Gastrocnemius medialis (tissue), 4 donors: ENCODE measurements at regions of chr5 and their contacts with region 1.

Region 1: DNA sequence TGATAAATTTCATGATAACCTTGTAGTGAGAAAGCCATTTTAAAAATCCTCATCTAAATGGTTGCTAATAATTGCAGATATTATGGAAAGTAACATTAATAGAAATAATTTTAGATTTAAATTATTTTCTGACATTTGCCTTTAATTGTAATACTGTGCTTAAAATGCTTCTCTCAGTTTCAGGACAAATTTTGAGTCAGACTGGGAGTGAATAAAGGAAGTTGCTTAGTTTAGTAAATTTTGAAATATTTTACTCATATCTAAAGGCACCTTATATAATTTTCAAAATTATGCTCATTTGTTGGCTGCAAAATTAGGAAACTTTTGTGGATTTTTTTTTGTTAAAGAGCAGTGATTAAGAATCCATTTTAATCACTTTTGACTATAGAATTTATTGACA is 93.8 kb downstream of the CSNK1G3 start:
- DNase-seq: no peak
- ATAC-seq: no peak
- H3K4me3 ChIP-seq: no peak overlapping the region
- H3K27ac ChIP-seq: no peak overlapping the region
- H3K4me1 ChIP-seq: no peaks in the 10 kb centered on the region
- H3K27me3 ChIP-seq: no peaks in the 10 kb centered on the region
- CTCF ChIP-seq: no peak
- POLR2A ChIP-seq: no peak

Region 2: DNA sequence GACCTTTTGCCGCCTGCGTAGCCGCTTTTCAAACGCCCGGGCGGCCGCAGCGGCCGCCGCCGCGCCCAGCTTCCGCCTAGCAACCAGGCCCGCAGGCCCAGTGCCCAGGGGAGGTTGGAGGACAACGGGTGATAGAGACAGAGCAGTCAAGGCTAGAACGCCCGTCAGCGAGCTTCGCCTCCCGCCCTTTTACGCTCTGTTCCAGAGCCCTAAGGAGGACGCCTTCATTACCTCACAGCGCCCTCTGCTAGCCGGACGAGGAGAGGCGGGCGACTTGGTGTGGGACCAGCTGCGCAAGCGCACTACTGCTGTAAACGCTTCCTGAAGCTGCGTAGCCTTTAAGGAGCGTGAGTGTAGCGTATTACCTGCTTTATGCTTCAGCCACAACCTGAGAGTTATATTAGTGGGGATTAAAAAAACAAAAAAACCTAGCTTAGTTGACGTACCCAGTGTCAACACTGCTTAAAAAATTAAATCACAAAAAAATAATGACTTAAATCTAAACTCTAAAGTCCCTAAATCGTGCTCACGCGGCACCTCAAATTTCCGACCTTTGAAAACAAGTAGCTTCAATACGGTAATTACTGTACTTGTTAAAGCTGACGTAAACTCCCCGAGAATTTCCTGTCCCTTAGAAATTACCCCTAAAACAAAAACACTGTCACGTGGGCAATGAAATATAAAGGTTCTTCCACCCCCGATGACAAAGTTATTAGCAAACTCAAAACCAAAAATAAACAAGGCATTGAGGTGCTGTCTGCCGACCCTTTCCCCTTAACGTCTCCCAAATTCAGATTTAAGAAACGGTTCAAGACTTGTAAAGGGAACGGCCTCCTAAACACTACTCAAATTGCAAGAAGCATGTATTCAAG is 182.3 kb before region 1 on chr5 and contains the start of gene CEP120:
- in situ Hi-C with region 1: loop called in 3 of 4 experiments (anchors 5 to 25 kb)
- intact Hi-C with region 1: loop called (anchors 1 kb)
- DNase-seq: peak; percentile 97 to 99
- ATAC-seq: peak; percentile 98 to 99
- H3K4me3 ChIP-seq: peak within 1 kb of the TSS; percentile 81 to 98 (median 89)
- H3K27ac ChIP-seq: peak within 1 kb of the TSS; percentile 86 to 91 (median 87)
- H3K4me1 ChIP-seq: peaks cover 9 to 11% of the 10 kb centered on the region in 2 donors
- H3K27me3 ChIP-seq: no peaks in the 10 kb centered on the region
- CTCF ChIP-seq: peak in 4 of 5 experiments; percentile 52 to 78 (median 70)
- POLR2A ChIP-seq: peak; percentile 48 to 67
- total RNA-seq, gene CEP120: 3.9 to 7.8 (median 7.6) TPM

Region 3: DNA sequence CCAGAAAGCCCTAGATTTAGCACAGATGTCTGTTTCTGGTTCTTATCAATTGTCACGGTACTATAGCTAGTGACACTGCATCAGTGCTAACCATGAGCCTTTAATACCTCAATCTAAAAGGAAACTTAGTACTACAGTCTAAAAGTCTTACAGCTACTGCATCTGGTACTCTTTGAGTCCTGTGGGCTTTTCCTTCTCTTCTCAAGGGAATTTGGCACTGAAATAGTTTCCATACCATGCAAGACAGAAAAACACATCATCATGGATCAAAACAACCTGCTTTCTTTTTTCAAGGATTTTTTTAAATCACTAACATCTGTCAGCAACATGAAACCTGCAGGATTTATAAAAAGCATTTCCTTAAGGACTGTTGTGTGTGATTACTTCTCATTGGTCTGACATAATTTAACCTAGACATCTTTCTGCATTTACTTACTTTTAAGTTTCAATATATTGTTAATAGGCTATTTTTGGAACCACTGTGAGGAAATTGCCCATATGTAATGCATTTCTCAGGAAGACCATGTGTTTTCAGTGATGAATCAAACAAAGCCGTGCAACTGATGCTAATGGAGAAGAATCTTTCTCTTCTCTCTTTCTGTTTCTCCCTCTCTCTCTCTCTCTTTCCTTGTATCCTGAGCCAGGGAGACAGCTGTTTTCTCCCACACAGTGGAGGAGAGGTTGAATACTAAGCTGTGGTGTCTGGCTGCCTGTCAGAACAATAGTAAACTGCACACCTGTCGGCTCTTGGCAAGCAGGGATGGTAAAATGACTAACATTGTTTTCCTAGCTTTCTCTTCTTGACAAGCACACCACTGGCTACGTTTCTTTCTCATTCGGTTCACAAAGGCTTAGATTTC is 179.6 kb after region 1 on chr5:
- in situ Hi-C with region 1: no loop called
- intact Hi-C with region 1: no loop called
- DNase-seq: peak; percentile 15 to 26
- ATAC-seq: peak; percentile 72 to 80
- H3K4me3 ChIP-seq: no peak overlapping the region
- H3K27ac ChIP-seq: no peak overlapping the region
- H3K4me1 ChIP-seq: peaks cover 8 to 16% of the 10 kb centered on the region in 2 donors
- H3K27me3 ChIP-seq: no peaks in the 10 kb centered on the region
- CTCF ChIP-seq: no peak
- POLR2A ChIP-seq: no peak